Cardiac septum (tissue), 1 donor: ENCODE measurements at regions of chr12 and their contacts with region 1.

Region 1: DNA sequence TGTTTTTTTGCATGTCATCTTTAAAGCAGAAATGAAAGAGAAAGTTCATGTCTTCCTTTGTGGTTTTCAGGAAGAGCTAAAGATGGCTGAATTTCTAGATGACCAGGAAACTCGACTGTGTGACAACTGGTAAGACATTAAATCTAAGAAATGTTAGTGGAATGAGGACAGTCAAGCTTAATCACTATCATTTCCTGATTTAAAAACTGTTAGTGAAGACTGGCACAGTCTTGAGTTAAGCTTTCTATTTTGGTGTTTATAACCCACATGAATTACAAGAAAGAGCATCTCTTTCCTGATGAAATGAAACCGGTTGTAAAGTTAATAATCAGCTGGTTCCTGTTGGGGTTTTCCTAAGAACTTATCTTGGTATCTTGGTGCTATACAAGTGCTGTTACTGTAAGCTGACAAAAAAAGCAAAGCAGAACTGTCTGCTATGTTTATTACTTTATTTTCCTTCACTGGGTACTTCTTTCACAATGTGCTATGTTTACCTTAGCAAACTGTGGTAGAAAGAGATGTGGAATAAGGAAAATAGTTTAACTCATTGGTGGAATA is 5.2 kb downstream of the TRAFD1 start:
- DNase-seq: no peak

Region 2: GRCh38 chr12:112096667-112097066 is 33.9 kb before region 1 on chr12:
- intact Hi-C with region 1: loop called (anchors 5 kb)
- DNase-seq: no peak